ENCODE measurements at regions of chr16 and their contacts with region 1.

Region 1: GRCh38 chr16:88856828-88857733 is at the starts of genes GALNS and TRAPPC2L:
- DNase-seq: peak; percentile 97 to 100 (median 99)
- ATAC-seq: peak; percentile 88
- H3K4me3 ChIP-seq: peak within 1 kb of the TSS; percentile 91 to 97
- H3K4me3 Mint-ChIP-seq: peak within 1 kb of the TSS; percentile 98
- H3K27ac ChIP-seq: peak within 1 kb of the TSS; percentile 74 to 83
- H3K27ac Mint-ChIP-seq: peak within 1 kb of the TSS; percentile 92
- H3K4me1 ChIP-seq: peaks cover 33% of the 10 kb centered on the region
- H3K4me1 Mint-ChIP-seq: peaks cover 39% of the 10 kb centered on the region
- H3K27me3 ChIP-seq: no peaks in the 10 kb centered on the region
- H3K27me3 Mint-ChIP-seq: no peaks in the 10 kb centered on the region
- CTCF ChIP-seq: no peak
- total RNA-seq, gene GALNS: 16.0 to 20.0 TPM
- total RNA-seq, gene TRAPPC2L: 53.4 to 56.5 TPM

Region 2: DNA sequence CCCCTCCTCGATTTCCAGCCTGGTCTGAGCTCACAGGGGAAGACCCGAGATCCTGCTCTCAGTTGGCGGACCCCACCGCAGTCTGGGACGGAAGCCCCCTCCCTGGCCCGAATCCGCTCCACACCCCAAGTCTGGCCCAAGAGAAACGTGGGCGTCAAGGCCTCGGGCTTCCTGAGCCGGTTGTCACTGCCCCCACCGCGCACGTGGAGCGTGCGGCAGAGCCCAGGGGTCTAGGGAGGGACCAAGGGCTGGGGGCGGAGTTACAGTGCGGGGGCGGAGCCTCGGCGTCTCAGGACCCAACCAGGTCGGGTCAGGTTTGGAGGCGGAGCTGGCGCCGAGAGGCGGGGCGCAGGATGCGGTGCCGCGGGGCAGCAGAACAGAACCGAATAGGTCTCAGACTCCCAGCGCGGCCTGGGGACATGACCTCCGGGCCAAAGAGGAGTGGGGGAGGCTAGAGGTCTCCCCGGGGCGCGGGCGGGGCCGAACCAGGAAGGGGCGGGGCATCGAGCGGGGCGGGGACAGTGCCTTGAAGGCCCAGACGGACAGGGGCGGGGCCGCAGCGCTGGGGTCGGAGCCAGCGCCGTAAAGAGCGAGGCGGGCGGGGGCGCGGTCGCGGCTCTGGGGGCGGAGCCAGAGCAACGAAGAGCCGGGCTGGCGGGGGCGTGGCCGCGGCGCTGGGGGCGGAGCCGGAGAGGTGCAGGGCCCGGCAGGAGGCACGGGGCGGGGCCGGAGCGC is 404.4 kb before region 1 on chr16:
- CTCF ChIA-PET with region 1: no interaction called
- POLR2A ChIA-PET with region 1: no interaction called
- intact Hi-C with region 1: loop called in 1 of 2 experiments (anchors 10 kb)
- DNase-seq: peak; percentile 97 to 100 (median 99)
- ATAC-seq: peak; percentile 72
- H3K4me3 ChIP-seq: peak overlapping the region; percentile 52 to 59
- H3K4me3 Mint-ChIP-seq: peak overlapping the region; percentile 85
- H3K27ac ChIP-seq: peak overlapping the region; percentile 55 to 80
- H3K27ac Mint-ChIP-seq: peak overlapping the region; percentile 88
- H3K4me1 ChIP-seq: peaks cover 33% of the 10 kb centered on the region
- H3K4me1 Mint-ChIP-seq: peaks cover 32% of the 10 kb centered on the region
- H3K27me3 ChIP-seq: no peaks in the 10 kb centered on the region
- H3K27me3 Mint-ChIP-seq: no peaks in the 10 kb centered on the region
- CTCF ChIP-seq: no peak

Region 3: GRCh38 chr16:88662843-88663606 is 194.1 kb before region 1 on chr16 and contains the start of gene MVD:
- CTCF ChIA-PET with region 1: no interaction called
- POLR2A ChIA-PET with region 1: no interaction called
- intact Hi-C with region 1: loop called in 1 of 2 experiments (anchors 5 kb)
- DNase-seq: peak; percentile 88 to 99 (median 95)
- ATAC-seq: peak; percentile 96
- H3K4me3 ChIP-seq: peak within 1 kb of the TSS; percentile 81 to 85
- H3K4me3 Mint-ChIP-seq: peak within 1 kb of the TSS; percentile 94
- H3K27ac ChIP-seq: peak within 1 kb of the TSS; percentile 84 to 87
- H3K27ac Mint-ChIP-seq: peak within 1 kb of the TSS; percentile 95
- H3K4me1 ChIP-seq: peaks cover 15% of the 10 kb centered on the region
- H3K4me1 Mint-ChIP-seq: peaks cover 20% of the 10 kb centered on the region
- H3K27me3 ChIP-seq: no peaks in the 10 kb centered on the region
- H3K27me3 Mint-ChIP-seq: no peaks in the 10 kb centered on the region
- CTCF ChIP-seq: no peak
- total RNA-seq, gene MVD: 118 to 124 TPM

Region 4: GRCh38 chr16:88713568-88714419 is 143.3 kb before region 1 on chr16:
- CTCF ChIA-PET with region 1: no interaction called
- POLR2A ChIA-PET with region 1: no interaction called
- intact Hi-C with region 1: no loop called
- DNase-seq: no peak
- ATAC-seq: no peak
- H3K4me3 ChIP-seq: no peak overlapping the region
- H3K4me3 Mint-ChIP-seq: no peak overlapping the region
- H3K27ac ChIP-seq: no peak overlapping the region
- H3K27ac Mint-ChIP-seq: no peak overlapping the region
- H3K4me1 ChIP-seq: no peaks in the 10 kb centered on the region
- H3K4me1 Mint-ChIP-seq: peaks cover 6% of the 10 kb centered on the region
- H3K27me3 ChIP-seq: no peaks in the 10 kb centered on the region
- H3K27me3 Mint-ChIP-seq: no peaks in the 10 kb centered on the region
- CTCF ChIP-seq: no peak

Region 5: DNA sequence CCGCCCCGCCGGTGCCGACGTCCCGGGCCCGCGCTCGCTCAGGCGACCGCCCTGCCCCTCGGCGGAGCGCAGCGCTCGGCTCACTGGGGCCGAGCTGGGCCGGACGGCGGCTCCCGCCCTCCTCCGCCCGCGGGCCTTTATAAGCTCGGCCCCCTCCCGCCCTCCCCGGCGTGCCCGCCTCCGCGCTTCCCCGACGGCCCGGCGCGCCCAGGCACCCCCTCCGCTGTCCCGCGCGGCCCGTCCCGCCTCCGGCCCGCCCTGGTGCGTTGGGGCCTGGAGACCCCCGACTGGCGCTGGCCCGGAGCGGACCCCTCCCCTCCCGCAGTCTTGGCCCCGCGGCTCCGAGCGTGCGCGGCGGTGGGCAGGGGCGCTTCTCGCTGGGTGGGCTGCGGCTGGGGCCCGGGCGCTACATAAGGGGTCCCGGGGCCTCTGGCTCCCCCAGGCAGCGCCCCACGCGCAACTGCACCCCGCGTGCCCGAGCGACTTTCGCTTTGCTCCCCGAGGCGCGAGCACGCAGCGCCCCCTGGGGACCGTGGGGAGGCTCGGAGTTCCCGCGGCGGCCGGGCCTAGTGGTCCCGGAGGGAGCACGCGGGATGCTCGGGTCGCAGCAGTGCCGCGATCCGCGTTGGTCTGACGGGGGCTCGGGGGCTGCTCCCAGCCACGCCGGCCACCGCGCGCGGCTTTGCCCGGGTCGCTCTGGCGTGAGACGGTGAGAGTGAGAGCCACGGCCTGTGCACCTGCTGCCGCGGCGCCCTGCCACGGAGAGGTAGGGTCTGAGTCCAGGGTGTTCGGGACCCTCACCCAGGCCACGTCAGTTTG is 71.8 kb before region 1 on chr16 and contains the start of gene PIEZO1:
- CTCF ChIA-PET with region 1: no interaction called
- POLR2A ChIA-PET with region 1: interaction called, 4 read pairs
- intact Hi-C with region 1: loop called in 1 of 2 experiments (anchors 1 kb)
- DNase-seq: peak; percentile 62 to 93 (median 84)
- ATAC-seq: peak; percentile 52
- H3K4me3 ChIP-seq: peak within 1 kb of the TSS; percentile 58 to 66
- H3K4me3 Mint-ChIP-seq: peak within 1 kb of the TSS; percentile 78
- H3K27ac ChIP-seq: peak within 1 kb of the TSS; percentile 40 to 85
- H3K27ac Mint-ChIP-seq: peak within 1 kb of the TSS; percentile 82
- H3K4me1 ChIP-seq: peaks cover 55% of the 10 kb centered on the region
- H3K4me1 Mint-ChIP-seq: peaks cover 43% of the 10 kb centered on the region
- H3K27me3 ChIP-seq: no peaks in the 10 kb centered on the region
- H3K27me3 Mint-ChIP-seq: no peaks in the 10 kb centered on the region
- CTCF ChIP-seq: peak; percentile 94
- total RNA-seq, gene PIEZO1: 67.4 to 70.1 TPM

Region 6: DNA sequence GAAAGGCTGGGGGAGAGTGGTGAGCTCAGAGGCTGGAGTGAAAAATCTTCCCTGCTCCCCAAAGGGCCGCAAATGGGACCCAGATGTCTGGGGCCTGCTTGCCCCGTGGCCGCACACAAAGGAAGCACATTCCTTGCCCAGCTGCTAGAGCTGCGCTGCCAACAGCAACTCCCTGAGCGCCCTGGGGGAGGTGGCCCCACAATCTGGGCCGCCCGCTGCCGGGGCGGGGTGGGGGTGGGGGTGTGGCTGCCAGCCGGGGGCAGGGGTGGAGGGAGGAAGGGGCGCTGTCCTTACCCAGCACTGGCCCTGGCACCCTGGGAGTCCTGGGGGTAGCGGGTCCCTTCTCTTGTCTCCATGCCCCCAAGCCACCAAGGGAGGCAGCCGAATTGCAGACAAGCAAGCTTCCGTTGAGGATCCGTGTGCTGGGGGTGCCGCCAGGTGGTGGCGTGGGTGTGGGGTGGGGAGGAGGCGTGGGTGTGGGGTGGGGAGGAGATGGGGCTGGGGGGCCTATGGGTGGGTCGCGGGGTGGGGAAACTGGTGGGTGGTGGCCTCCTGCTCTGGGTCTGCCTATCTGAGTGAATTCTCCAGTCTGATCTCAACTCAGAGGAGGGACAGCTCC is 57.8 kb after region 1 on chr16:
- CTCF ChIA-PET with region 1: no interaction called
- POLR2A ChIA-PET with region 1: no interaction called
- intact Hi-C with region 1: no loop called
- DNase-seq: no peak
- ATAC-seq: no peak
- H3K4me3 ChIP-seq: no peak overlapping the region
- H3K4me3 Mint-ChIP-seq: no peak overlapping the region
- H3K27ac ChIP-seq: no peak overlapping the region
- H3K27ac Mint-ChIP-seq: no peak overlapping the region
- H3K4me1 ChIP-seq: no peaks in the 10 kb centered on the region
- H3K4me1 Mint-ChIP-seq: no peaks in the 10 kb centered on the region
- H3K27me3 ChIP-seq: no peaks in the 10 kb centered on the region
- H3K27me3 Mint-ChIP-seq: no peaks in the 10 kb centered on the region
- CTCF ChIP-seq: no peak

Region 7: DNA sequence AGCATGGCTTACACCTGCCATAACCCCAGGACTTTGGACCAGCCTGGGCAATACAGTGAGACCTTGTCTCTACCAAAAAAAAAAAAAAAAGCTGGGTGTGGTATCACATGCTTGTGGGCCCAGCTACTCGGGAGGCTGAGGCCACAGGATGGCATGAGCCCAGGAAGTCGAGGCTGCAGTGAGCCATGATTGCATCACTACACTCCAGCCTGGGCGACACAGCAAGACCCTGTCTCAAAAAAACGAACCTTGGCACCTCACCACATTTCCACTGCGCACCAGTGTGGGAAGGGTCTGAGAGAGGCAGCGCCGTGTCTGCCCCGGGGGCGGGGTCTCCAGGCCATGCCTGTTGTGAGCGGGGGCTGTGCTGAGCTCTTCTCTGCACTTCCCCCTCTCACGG is 242.8 kb after region 1 on chr16:
- CTCF ChIA-PET with region 1: no interaction called
- POLR2A ChIA-PET with region 1: interaction called, 6 read pairs
- intact Hi-C with region 1: loop called in 1 of 2 experiments (anchors 5 kb)
- DNase-seq: peak in 3 of 9 experiments; percentile 17 to 61 (median 60)
- ATAC-seq: no peak
- H3K4me3 ChIP-seq: no peak overlapping the region
- H3K4me3 Mint-ChIP-seq: no peak overlapping the region
- H3K27ac ChIP-seq: no peak overlapping the region
- H3K27ac Mint-ChIP-seq: peak overlapping the region; percentile 71
- H3K4me1 ChIP-seq: peaks cover 66% of the 10 kb centered on the region
- H3K4me1 Mint-ChIP-seq: peaks cover 55% of the 10 kb centered on the region
- H3K27me3 ChIP-seq: no peaks in the 10 kb centered on the region
- H3K27me3 Mint-ChIP-seq: no peaks in the 10 kb centered on the region
- CTCF ChIP-seq: no peak

Region 8: DNA sequence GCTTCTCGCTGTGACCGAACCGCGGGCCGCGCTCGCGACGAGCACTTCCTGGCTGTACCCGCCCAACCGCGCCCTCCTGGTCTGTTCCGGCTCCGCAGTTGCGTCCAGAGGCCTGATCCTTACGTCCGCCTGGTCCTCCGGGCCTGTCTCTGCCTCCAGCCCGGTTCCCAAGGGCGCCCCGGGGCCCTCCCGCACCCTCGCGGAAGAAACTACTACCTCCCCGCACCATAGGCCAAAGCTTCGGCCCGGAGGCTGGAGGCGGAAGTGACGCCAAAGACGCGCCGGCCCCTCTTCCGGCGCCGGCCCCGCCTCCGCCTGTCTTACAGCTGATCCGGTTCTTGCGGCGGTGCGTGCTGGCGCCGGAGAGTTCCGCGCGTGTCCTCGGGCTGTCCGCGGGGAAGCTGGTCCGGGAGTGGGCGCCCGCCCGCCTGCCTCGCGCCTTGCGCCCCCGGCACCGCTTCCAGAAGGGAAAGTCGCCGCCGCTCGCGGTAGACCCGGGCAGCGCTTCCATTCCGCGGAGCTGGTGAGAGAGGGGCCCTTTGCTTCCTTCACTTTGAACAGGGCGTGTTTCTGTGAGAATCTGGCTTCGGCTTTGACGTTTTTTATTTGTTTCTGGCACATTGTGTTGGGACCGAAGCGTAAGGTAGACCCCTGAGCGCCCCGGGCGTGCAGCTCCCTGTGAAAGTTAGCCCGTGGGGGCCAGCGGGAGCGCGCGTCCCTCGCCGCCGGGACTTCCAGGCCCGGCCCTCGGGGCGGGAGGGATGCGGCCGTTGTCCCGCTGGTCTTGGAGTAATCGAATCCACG is 360.5 kb after region 1 on chr16 and contains the start of gene ZNF778:
- CTCF ChIA-PET with region 1: interaction called, 4 read pairs
- POLR2A ChIA-PET with region 1: interaction called, 5 read pairs
- intact Hi-C with region 1: loop called (anchors 1 kb)
- DNase-seq: peak; percentile 56 to 92 (median 80)
- ATAC-seq: peak; percentile 69
- H3K4me3 ChIP-seq: peak within 1 kb of the TSS; percentile 87 to 90
- H3K4me3 Mint-ChIP-seq: peak within 1 kb of the TSS; percentile 93
- H3K27ac ChIP-seq: peak within 1 kb of the TSS; percentile 95 to 98
- H3K27ac Mint-ChIP-seq: peak within 1 kb of the TSS; percentile 83
- H3K4me1 ChIP-seq: peaks cover 16% of the 10 kb centered on the region
- H3K4me1 Mint-ChIP-seq: peaks cover 35% of the 10 kb centered on the region
- H3K27me3 ChIP-seq: no peaks in the 10 kb centered on the region
- H3K27me3 Mint-ChIP-seq: no peaks in the 10 kb centered on the region
- CTCF ChIP-seq: no peak
- total RNA-seq, gene ZNF778: 8.4 to 8.9 TPM